CD4-positive, alpha-beta T cell (primary cell): ENCODE measurements at regions of chr5 and their contacts with region 1.

Region 1: GRCh38 chr5:31833005-31833404 is 194.1 kb downstream of the PDZD2 start:
- DNase-seq: no peak
- ATAC-seq: no peak
- H3K4me3 ChIP-seq: no peak overlapping the region
- H3K4me3 Mint-ChIP-seq: no peak overlapping the region
- H3K27ac ChIP-seq: no peak overlapping the region
- H3K27ac Mint-ChIP-seq: no peak overlapping the region
- H3K4me1 ChIP-seq: no peaks in the 10 kb centered on the region
- H3K4me1 Mint-ChIP-seq: no peaks in the 10 kb centered on the region
- H3K27me3 ChIP-seq: no peaks in the 10 kb centered on the region
- H3K27me3 Mint-ChIP-seq: no peaks in the 10 kb centered on the region
- CTCF ChIP-seq: no peak

Region 2: GRCh38 chr5:31208043-31208442 is 625.0 kb before region 1 on chr5:
- CTCF ChIA-PET with region 1: no interaction called
- POLR2A ChIA-PET with region 1: no interaction called
- intact Hi-C with region 1: no loop called
- DNase-seq: no peak
- ATAC-seq: no peak
- H3K4me3 ChIP-seq: no peak overlapping the region
- H3K4me3 Mint-ChIP-seq: no peak overlapping the region
- H3K27ac ChIP-seq: no peak overlapping the region
- H3K27ac Mint-ChIP-seq: no peak overlapping the region
- H3K4me1 ChIP-seq: no peaks in the 10 kb centered on the region
- H3K4me1 Mint-ChIP-seq: no peaks in the 10 kb centered on the region
- H3K27me3 ChIP-seq: no peaks in the 10 kb centered on the region
- H3K27me3 Mint-ChIP-seq: no peaks in the 10 kb centered on the region
- CTCF ChIP-seq: no peak

Region 3: DNA sequence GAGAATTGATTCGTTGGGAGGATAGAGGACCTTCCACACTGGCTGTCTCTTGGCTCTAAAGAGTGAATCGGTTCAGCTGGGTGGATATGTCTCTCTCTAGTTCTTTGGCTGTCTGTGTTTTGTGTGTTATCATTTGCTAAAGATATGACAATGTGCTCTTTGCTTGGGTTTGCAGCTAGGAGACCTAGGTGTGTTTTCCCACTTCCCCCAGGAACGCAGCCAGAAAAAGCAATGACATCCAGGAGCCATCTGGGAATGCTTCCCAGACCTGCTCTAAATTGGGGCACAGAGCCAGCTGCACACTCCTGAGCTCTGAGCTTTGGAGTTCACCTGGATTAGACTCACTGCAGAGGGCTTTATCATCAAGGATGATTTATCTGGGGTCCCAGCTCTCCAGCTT is 206.8 kb before region 1 on chr5:
- CTCF ChIA-PET with region 1: no interaction called
- POLR2A ChIA-PET with region 1: no interaction called
- intact Hi-C with region 1: no loop called
- DNase-seq: no peak
- ATAC-seq: no peak
- H3K4me3 ChIP-seq: no peak overlapping the region
- H3K4me3 Mint-ChIP-seq: no peak overlapping the region
- H3K27ac ChIP-seq: no peak overlapping the region
- H3K27ac Mint-ChIP-seq: no peak overlapping the region
- H3K4me1 ChIP-seq: no peaks in the 10 kb centered on the region
- H3K4me1 Mint-ChIP-seq: no peaks in the 10 kb centered on the region
- H3K27me3 ChIP-seq: peaks cover 0 to 4% of the 10 kb centered on the region in 2 experiments
- H3K27me3 Mint-ChIP-seq: peaks cover 14% of the 10 kb centered on the region
- CTCF ChIP-seq: no peak

Region 4: GRCh38 chr5:31757806-31758205 is 75.2 kb before region 1 on chr5:
- CTCF ChIA-PET with region 1: no interaction called
- POLR2A ChIA-PET with region 1: no interaction called
- intact Hi-C with region 1: no loop called
- DNase-seq: no peak
- ATAC-seq: no peak
- H3K4me3 ChIP-seq: no peak overlapping the region
- H3K4me3 Mint-ChIP-seq: no peak overlapping the region
- H3K27ac ChIP-seq: no peak overlapping the region
- H3K27ac Mint-ChIP-seq: no peak overlapping the region
- H3K4me1 ChIP-seq: no peaks in the 10 kb centered on the region
- H3K4me1 Mint-ChIP-seq: no peaks in the 10 kb centered on the region
- H3K27me3 ChIP-seq: no peaks in the 10 kb centered on the region
- H3K27me3 Mint-ChIP-seq: no peaks in the 10 kb centered on the region
- CTCF ChIP-seq: no peak

Region 5: DNA sequence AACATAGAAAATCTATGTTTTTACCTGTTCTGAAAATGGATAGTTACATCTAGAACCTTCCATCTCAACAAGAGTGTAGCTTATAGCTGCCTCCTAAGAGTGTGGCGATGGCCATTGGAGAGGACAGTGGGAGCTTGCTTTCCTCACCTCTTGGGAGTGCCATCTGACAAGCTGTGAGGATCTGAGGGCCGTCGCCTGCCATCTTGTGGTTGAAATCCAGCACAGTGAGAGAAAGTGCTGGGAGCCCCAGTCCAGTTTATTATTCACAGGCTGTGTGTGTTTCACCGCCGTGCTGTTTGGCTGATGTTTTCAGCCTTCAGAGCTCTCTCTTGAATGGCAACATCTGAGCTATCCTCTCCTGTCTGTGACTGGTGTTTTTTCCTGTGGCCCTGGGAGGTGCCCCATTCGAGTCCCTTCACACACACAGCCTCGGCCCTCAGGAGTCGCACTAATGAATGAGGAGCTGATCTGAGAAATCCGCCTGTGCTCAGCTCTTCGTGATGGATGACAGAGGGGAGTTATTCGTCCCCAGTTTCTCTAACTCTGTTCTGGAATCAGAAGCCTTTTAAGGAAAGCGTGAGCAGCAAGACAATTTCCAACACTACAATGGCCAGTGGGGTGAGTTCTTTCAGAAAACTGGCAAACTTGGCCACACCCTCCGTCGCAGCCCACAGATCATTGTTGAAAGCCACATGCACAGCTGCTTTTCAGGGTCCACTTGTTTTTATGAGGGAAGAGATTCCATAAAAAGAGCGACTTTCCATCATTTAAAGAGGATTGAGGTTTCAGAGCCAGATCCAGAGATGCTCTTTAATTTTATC is 23.7 kb before region 1 on chr5:
- CTCF ChIA-PET with region 1: no interaction called
- POLR2A ChIA-PET with region 1: no interaction called
- intact Hi-C with region 1: loop called in 1 of 2 experiments (anchors 1 kb)
- DNase-seq: peak in 6 of 14 experiments; percentile 1 to 52 (median 10)
- ATAC-seq: no peak
- H3K4me3 ChIP-seq: no peak overlapping the region
- H3K4me3 Mint-ChIP-seq: no peak overlapping the region
- H3K27ac ChIP-seq: no peak overlapping the region
- H3K27ac Mint-ChIP-seq: no peak overlapping the region
- H3K4me1 ChIP-seq: no peaks in the 10 kb centered on the region
- H3K4me1 Mint-ChIP-seq: no peaks in the 10 kb centered on the region
- H3K27me3 ChIP-seq: no peaks in the 10 kb centered on the region
- H3K27me3 Mint-ChIP-seq: no peaks in the 10 kb centered on the region
- CTCF ChIP-seq: peak; percentile 22